SK-N-SH (cell line): ENCODE measurements at regions of chr19 and their contacts with region 1.

Region 1: DNA sequence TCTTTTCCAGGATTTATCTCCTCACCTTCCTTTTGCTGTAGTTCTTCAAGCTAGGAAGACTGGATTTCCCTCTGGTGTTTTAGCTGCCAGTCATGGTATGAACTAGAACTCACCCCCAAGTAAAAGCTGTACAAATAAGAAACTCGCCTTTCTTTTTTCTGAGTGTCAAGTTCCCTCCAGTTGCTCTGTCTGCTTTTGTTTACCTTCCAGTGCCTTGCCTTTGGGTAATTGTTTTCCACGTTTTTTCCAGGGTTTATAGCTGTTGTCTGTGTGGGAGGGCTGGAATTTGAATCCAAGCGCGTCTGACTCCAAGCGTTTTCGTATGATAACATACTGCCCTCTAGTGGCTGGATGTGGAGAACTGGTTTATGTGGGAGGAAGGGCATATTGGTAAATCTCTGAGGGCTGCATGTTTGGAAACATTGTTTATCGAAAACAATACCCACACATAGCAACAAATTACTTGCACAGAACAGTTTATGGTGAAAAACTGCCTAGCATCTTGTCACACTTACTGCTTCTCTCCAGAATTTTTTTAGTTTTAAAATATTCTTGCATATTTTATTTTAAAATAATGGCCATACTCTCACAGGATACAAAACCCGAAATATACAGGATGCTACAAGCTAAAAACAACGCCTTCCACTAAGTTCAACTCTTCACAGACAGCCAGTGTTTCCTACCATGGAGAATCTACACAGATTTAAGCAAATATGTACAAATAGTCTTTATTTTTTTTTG is 19.2 kb downstream of the RCN3 start:
- DNase-seq: peak; percentile 83
- H3K4me3 ChIP-seq: peak overlapping the region in 1 of 2 experiments; percentile 33; a peak in 1 of 4 replicates
- H3K27ac ChIP-seq: no peak overlapping the region
- H3K4me1 ChIP-seq: no peaks in the 10 kb centered on the region
- H3K27me3 ChIP-seq: no peaks in the 10 kb centered on the region
- CTCF ChIP-seq: peak; percentile 87
- EP300 ChIP-seq: no peak
- RAD21 ChIP-seq: peak; percentile 94

Region 2: DNA sequence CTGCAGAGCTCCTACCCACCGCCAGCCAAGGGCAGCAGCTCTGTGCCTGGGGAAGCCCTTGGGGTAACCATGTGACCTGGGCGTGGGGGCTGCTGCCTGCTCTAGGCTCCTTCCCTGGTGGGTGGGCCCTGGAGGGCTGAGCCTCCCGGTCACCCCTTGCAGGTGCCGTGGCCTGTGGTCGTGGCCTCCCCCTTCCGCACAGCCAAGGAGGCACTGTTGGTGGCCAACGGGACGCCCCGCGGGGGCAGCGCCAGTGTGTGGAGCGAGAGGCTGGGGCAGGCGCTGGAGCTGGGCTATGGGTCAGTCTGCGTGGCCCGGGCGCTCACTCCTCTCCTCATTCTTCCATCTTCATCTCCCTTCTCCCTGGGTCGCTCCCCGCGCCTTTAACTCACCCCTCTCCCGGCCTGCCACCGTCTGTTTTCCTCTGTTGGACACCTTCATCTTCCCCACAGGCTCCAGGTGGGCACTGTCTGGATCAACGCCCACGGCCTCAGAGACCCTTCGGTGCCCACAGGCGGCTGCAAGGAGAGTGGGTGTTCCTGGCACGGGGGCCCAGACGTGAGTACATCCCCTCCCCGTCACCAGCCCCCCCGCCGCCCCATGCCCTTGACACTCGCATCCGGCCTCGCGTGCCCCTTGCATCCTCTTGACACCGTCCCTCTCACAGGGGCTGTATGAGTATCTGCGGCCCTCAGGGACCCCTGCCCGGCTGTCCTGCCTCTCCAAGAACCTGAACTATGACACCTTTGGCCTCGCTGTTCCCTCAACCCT is 82.8 kb before region 1 on chr19:
- CTCF ChIA-PET with region 1: no interaction called
- POLR2A ChIA-PET with region 1: no interaction called
- DNase-seq: peak; percentile 21
- H3K4me3 ChIP-seq: no peak overlapping the region
- H3K27ac ChIP-seq: no peak overlapping the region
- H3K4me1 ChIP-seq: no peaks in the 10 kb centered on the region
- H3K27me3 ChIP-seq: no peaks in the 10 kb centered on the region
- CTCF ChIP-seq: no peak
- EP300 ChIP-seq: no peak
- RAD21 ChIP-seq: no peak

Region 3: DNA sequence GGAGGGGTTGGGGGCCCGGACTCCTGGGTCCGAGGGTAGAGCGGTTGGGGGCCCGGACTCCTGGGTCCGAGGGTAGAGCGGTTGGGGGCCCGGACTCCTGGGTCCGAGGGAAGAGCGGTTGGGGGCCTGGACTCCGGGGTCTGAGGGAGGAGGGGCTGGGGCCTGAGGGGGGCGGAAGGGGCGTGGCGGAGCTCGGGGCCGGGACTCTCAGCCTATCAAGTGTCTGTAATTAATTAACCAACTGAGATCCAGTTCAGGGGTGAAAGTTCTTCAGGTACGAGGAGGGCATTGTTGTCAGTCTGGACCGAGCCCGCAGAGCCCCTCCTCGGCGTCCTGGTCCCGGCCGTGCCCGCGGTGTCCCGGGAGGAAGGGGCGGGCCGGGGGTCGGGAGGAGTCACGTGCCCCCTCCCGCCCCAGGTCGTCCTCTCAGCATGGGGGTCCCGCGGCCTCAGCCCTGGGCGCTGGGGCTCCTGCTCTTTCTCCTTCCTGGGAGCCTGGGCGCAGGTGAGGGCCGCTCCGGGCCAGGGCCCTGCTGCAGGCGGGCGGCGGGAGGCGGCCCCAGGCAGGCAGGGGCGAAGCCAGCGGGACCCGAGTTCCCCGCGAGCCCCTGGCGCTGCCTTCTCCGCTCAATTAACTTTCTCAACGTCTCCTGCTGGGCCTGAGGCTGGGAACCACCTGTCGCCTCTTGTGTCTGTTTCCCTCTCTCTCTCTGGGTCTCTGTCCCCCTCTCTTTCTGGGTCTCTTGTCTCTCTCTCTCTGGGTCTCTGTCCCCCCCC is 33.8 kb before region 1 on chr19:
- CTCF ChIA-PET with region 1: interaction called, 11 read pairs
- POLR2A ChIA-PET with region 1: no interaction called
- DNase-seq: peak; percentile 88
- H3K4me3 ChIP-seq: peak overlapping the region; percentile 60 to 78
- H3K27ac ChIP-seq: peak overlapping the region in 1 of 2 experiments; percentile 71; a peak in 1 of 4 replicates
- H3K4me1 ChIP-seq: peaks cover 0 to 9% of the 10 kb centered on the region in 2 experiments; a peak in 1 of 4 replicates
- H3K27me3 ChIP-seq: no peaks in the 10 kb centered on the region
- CTCF ChIP-seq: no peak
- EP300 ChIP-seq: no peak
- RAD21 ChIP-seq: no peak

Region 4: DNA sequence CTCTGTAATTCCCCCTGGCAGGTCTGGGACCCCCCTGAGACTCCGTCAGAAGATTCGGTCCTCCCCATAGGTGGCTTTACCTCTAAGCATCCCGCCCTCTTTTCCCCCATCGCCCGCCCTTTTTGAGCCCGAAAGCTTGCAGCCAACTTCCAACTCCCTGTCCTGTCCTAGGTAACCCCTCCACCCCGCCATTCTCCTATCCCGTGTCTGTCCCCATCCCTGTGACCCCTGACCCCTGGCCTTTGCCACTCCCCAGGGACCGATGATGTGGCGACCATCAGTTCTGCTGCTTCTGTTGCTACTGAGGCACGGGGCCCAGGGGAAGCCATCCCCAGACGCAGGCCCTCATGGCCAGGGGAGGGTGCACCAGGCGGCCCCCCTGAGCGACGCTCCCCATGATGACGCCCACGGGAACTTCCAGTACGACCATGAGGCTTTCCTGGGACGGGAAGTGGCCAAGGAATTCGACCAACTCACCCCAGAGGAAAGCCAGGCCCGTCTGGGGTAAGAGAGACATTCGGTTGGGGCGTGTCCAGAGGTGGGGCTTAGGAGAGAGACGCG is 18.7 kb before region 1 on chr19:
- CTCF ChIA-PET with region 1: interaction called, 55 read pairs
- POLR2A ChIA-PET with region 1: no interaction called
- DNase-seq: no peak
- H3K4me3 ChIP-seq: peak overlapping the region in 1 of 2 experiments; percentile 27; a peak in 1 of 4 replicates
- H3K27ac ChIP-seq: no peak overlapping the region
- H3K4me1 ChIP-seq: peaks cover 0 to 5% of the 10 kb centered on the region in 2 experiments; a peak in 1 of 4 replicates
- H3K27me3 ChIP-seq: no peaks in the 10 kb centered on the region
- CTCF ChIP-seq: no peak
- EP300 ChIP-seq: no peak
- RAD21 ChIP-seq: no peak

Region 5: DNA sequence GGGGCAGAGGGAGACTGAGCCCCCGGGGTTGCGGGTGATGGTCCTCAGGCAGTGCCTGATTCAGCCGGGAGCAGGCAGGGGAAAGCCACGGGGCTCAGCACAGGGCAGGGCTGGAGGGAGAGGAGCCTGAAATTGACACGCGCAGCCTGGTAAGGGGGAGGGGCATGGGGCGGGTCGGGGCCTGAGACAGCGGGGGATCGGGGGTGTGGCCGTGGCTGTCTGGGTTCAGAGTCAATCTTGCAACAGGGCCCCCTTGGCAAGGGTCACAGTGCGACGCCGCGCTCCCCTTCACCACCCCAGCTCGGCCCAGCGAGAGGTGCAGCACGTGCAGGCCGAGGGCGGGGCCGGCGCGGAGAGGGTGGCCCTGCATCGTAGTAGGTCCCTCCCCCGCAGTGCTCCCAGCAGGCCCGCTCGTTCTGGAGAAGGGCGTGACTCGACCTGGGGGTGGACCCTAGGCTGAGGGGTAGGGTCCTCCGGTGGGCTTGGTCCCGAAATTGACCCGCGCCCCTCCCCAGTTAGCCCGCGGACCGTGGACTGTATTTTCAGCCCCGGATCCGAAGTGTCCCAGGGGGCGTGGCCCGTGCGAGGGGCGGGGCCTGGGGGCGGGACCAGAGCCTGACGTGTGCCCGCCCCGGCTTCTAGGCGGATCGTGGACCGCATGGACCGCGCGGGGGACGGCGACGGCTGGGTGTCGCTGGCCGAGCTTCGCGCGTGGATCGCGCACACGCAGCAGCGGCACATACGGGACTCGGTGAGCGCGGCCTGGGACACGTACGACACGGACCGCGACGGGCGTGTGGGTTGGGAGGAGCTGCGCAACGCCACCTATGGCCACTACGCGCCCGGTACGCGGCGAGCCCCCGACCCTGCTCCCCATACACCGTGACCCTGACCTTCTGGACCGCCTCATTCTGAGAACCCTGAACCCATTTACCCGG is 13.2 kb before region 1 on chr19:
- CTCF ChIA-PET with region 1: interaction called, 55 read pairs
- POLR2A ChIA-PET with region 1: no interaction called
- DNase-seq: peak; percentile 93
- H3K4me3 ChIP-seq: peak overlapping the region; percentile 51 to 71
- H3K27ac ChIP-seq: no peak overlapping the region
- H3K4me1 ChIP-seq: peaks cover 0 to 3% of the 10 kb centered on the region in 2 experiments; a peak in 1 of 4 replicates
- H3K27me3 ChIP-seq: no peaks in the 10 kb centered on the region
- CTCF ChIP-seq: peak; percentile 55
- EP300 ChIP-seq: no peak
- RAD21 ChIP-seq: no peak

Region 6: GRCh38 chr19:49580264-49581006 is 33.4 kb after region 1 on chr19 and contains the start of gene NOSIP:
- CTCF ChIA-PET with region 1: interaction called, 15 read pairs
- POLR2A ChIA-PET with region 1: no interaction called
- DNase-seq: peak; percentile 88
- H3K4me3 ChIP-seq: peak within 1 kb of the TSS; percentile 66 to 88
- H3K27ac ChIP-seq: peak within 1 kb of the TSS; percentile 50 to 69
- H3K4me1 ChIP-seq: peaks cover 0 to 13% of the 10 kb centered on the region in 2 experiments; a peak in 2 of 4 replicates
- H3K27me3 ChIP-seq: no peaks in the 10 kb centered on the region
- CTCF ChIP-seq: no peak
- EP300 ChIP-seq: no peak; a peak in 1 of 4 replicates
- RAD21 ChIP-seq: no peak
- polyA plus RNA-seq, gene NOSIP: 101 and 128 TPM in 2 replicates

Region 7: DNA sequence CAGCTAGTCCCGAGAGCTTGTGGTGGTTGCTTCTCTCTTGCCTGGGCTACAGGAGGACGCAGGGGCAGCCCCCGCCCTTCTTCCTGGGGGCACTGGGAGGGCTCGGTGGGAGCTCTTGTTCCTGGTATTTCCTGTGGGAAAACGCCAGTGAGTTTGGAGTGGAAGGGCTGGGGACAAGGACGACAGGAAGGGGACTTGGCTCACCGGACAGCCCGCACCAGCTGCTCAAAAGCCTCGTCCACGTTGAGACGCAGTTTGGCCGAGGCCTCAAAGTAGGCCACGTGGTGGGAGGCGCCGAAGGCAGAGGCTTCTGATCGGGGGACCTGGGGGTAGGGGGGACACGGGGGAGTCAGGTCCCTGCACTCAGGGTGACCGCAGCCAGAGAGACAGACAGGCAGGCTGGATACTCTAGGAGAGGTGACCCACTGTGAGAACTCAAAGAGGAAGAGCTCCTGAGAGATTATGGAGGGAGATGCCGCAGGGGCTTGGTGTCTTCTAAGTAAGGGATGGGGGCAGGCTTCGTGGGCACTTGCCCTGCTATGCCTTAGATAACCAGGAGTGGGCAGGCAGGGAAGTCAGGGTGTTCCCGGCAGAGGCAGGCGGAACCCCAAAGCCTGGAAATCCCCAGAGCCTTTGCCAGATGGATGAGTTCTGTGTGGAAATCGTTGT is 88.7 kb after region 1 on chr19:
- CTCF ChIA-PET with region 1: no interaction called
- POLR2A ChIA-PET with region 1: no interaction called
- DNase-seq: no peak
- H3K4me3 ChIP-seq: no peak overlapping the region
- H3K27ac ChIP-seq: no peak overlapping the region
- H3K4me1 ChIP-seq: peaks cover 12 to 17% of the 10 kb centered on the region in 2 experiments; a peak in 3 of 4 replicates
- H3K27me3 ChIP-seq: no peaks in the 10 kb centered on the region
- CTCF ChIP-seq: no peak
- EP300 ChIP-seq: no peak
- RAD21 ChIP-seq: no peak